CD8-positive, alpha-beta T cell (primary cell): ENCODE measurements at regions of chr2 and their contacts with region 1.

Region 1: GRCh38 chr2:238370823-238371372 is 50.6 kb downstream of the TRAF3IP1 start:
- DNase-seq: peak in 8 of 9 experiments; percentile 30 to 74 (median 64)
- ATAC-seq: peak; percentile 74
- H3K4me3 ChIP-seq: no peak overlapping the region
- H3K4me3 Mint-ChIP-seq: no peak overlapping the region
- H3K27ac ChIP-seq: no peak overlapping the region
- H3K27ac Mint-ChIP-seq: no peak overlapping the region
- H3K4me1 ChIP-seq: no peaks in the 10 kb centered on the region
- H3K4me1 Mint-ChIP-seq: peaks cover 7% of the 10 kb centered on the region
- H3K27me3 ChIP-seq: no peaks in the 10 kb centered on the region
- H3K27me3 Mint-ChIP-seq: no peaks in the 10 kb centered on the region
- CTCF ChIP-seq: peak; percentile 73

Region 2: GRCh38 chr2:238574490-238575271 is 203.8 kb after region 1 on chr2:
- CTCF ChIA-PET with region 1: no interaction called
- POLR2A ChIA-PET with region 1: no interaction called
- intact Hi-C with region 1: loop called in 1 of 2 experiments (anchors 5 kb)
- DNase-seq: no peak
- ATAC-seq: no peak
- H3K4me3 ChIP-seq: no peak overlapping the region
- H3K4me3 Mint-ChIP-seq: no peak overlapping the region
- H3K27ac ChIP-seq: no peak overlapping the region
- H3K27ac Mint-ChIP-seq: no peak overlapping the region
- H3K4me1 ChIP-seq: no peaks in the 10 kb centered on the region
- H3K4me1 Mint-ChIP-seq: no peaks in the 10 kb centered on the region
- H3K27me3 ChIP-seq: peaks cover 0 to 2% of the 10 kb centered on the region in 2 experiments
- H3K27me3 Mint-ChIP-seq: peaks cover 10% of the 10 kb centered on the region
- CTCF ChIP-seq: no peak

Region 3: DNA sequence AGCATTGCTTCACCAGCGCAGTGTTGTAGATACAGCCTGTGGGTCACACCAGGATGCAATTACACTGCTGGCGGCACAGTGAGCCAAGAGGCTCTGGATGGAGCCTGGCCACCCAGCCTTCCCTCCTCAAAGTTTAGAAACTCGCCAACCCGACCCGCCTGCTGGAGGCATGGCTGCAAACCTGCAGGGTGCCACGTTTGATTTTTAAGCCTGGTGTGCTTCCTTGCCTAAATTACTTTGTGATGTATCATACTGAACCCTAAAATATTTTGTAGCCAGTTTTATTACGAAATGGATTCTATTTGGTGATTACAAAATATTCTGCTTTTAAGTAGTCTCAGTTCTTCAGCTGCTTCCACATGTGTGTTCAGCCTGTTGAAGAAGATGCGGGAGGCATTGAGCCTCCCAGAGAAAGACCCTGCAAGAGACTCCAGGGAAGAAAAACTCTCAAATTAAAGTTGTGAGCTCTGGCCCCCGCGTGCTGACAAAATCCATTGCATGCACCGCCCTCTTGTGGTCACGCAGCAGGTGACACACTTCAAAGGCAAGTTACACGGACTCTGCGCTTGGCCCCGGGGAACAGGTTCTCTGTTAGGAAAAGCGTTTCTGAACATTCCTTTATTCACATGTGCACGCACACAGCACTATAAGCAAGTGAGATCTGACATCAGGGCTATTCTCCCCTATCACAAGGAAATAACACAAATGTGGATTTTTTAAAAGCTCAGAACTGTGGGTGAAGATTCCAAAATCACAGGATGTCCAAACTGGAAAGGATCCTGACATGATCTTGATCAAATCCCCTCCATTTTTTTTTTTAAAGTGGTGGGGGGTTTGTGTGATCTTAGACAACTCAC is 414.0 kb after region 1 on chr2:
- CTCF ChIA-PET with region 1: interaction called, 27 read pairs
- POLR2A ChIA-PET with region 1: no interaction called
- intact Hi-C with region 1: loop called in 1 of 2 experiments (anchors 1 kb)
- DNase-seq: peak; percentile 16 to 70 (median 54)
- ATAC-seq: no peak
- H3K4me3 ChIP-seq: no peak overlapping the region
- H3K4me3 Mint-ChIP-seq: no peak overlapping the region
- H3K27ac ChIP-seq: no peak overlapping the region
- H3K27ac Mint-ChIP-seq: no peak overlapping the region
- H3K4me1 ChIP-seq: no peaks in the 10 kb centered on the region
- H3K4me1 Mint-ChIP-seq: no peaks in the 10 kb centered on the region
- H3K27me3 ChIP-seq: no peaks in the 10 kb centered on the region
- H3K27me3 Mint-ChIP-seq: peaks cover 9% of the 10 kb centered on the region
- CTCF ChIP-seq: peak; percentile 81